Calu3 (cell line): ENCODE measurements at regions of chr4 and their contacts with region 1.

Region 1: GRCh38 chr4:27010334-27010940 is 149.8 kb downstream of the STIM2 start:
- DNase-seq: peak; percentile 59
- H3K4me3 Mint-ChIP-seq: no peak overlapping the region
- H3K27ac Mint-ChIP-seq: no peak overlapping the region
- H3K4me1 Mint-ChIP-seq: peaks cover 14% of the 10 kb centered on the region
- H3K27me3 Mint-ChIP-seq: no peaks in the 10 kb centered on the region
- CTCF ChIP-seq: peak; percentile 53

Region 2: DNA sequence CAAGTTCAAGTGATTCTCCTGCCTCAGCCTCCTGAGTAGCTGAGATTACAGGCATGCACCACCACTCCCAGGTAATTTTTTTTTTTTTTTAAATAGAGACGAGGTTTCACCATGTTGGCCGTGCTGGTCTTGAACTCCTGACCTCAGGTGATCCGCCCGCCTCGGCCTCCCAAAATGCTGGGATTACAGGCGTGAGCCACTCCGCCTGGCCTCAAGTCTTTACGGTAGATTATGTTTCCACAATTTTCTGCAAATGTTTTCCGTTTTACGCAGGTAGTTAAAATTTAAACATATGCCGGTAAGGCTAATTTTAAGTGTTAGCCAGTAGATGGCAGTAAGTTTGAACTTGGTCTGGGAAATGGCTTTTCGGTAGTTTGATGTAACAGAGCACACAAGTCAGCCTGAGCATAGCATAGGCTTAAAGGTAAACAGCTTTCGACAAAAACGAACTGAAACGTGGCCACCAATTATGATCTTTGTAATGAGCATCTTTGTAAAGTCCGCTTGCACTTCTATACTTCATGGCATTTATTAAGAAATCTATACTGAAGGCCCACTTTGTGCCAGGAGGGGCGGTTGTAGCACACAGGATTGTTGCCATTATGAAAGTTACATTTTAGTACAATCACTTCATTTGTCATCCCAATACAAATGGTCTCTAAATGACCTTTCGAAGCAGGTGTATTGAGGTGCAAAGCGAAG is 551.2 kb before region 1 on chr4:
- CTCF ChIA-PET with region 1: no interaction called
- intact Hi-C with region 1: loop called (anchors 2 kb)
- DNase-seq: peak; percentile 5
- H3K4me3 Mint-ChIP-seq: no peak overlapping the region
- H3K27ac Mint-ChIP-seq: no peak overlapping the region
- H3K4me1 Mint-ChIP-seq: no peaks in the 10 kb centered on the region
- H3K27me3 Mint-ChIP-seq: peaks cover 10% of the 10 kb centered on the region
- CTCF ChIP-seq: no peak

Region 3: GRCh38 chr4:26746802-26747213 is 263.6 kb before region 1 on chr4:
- CTCF ChIA-PET with region 1: no interaction called
- intact Hi-C with region 1: loop called (anchors 10 kb)
- DNase-seq: no peak
- H3K4me3 Mint-ChIP-seq: no peak overlapping the region
- H3K27ac Mint-ChIP-seq: no peak overlapping the region
- H3K4me1 Mint-ChIP-seq: no peaks in the 10 kb centered on the region
- H3K27me3 Mint-ChIP-seq: no peaks in the 10 kb centered on the region
- CTCF ChIP-seq: no peak

Region 4: DNA sequence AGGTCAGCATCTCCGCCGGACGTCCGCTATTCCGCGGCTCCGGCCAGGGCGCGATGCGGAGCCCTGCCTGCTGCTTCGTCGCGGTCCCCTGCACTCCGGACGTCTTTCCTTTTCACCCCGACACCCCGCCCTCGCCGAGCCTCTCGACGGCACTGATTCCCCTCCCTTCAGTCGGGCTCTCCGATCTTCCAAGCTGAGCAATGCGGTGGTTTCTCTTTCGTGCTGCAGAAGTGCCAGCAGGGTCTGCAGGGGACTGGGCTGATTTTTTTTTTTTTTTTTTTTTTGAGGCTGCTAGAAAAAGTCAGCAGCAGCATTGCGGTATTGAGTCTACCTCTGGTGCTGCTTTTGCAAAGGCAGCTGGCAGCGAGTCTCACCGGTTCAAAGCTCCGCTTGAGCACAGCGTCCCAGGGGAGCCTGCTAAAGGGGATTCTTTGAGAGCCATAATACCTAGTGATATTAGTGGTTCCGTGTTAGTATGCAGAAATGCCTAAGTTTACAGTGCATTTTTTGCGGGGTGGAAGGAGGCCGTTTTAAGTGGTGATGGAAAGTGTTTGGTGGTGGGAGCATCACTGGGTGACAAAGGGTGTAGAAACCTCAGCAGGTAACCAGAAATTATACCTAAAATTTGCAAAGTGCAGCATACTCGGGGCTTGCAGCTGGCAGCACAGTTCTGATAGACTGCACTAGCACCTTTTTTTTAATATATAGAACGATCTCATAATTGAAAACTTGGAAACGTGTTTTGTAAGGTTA is 148.8 kb before region 1 on chr4:
- CTCF ChIA-PET with region 1: no interaction called
- intact Hi-C with region 1: loop called (anchors 2 kb)
- DNase-seq: peak; percentile 56
- H3K4me3 Mint-ChIP-seq: peak overlapping the region; percentile 80
- H3K27ac Mint-ChIP-seq: peak overlapping the region; percentile 70
- H3K4me1 Mint-ChIP-seq: peaks cover 31% of the 10 kb centered on the region
- H3K27me3 Mint-ChIP-seq: no peaks in the 10 kb centered on the region
- CTCF ChIP-seq: no peak

Region 5: GRCh38 chr4:27248829-27249228 is 238.4 kb after region 1 on chr4:
- CTCF ChIA-PET with region 1: no interaction called
- intact Hi-C with region 1: no loop called
- DNase-seq: no peak
- H3K4me3 Mint-ChIP-seq: no peak overlapping the region
- H3K27ac Mint-ChIP-seq: no peak overlapping the region
- H3K4me1 Mint-ChIP-seq: no peaks in the 10 kb centered on the region
- H3K27me3 Mint-ChIP-seq: no peaks in the 10 kb centered on the region
- CTCF ChIP-seq: no peak